GM10248 (cell line): ENCODE measurements at regions of chr12 and their contacts with region 1.

Region 1: GRCh38 chr12:7219599-7220243 is 30.2 kb downstream of the PEX5 start:
- DNase-seq: peak; percentile 60
- CTCF ChIP-seq: peak; percentile 67

Region 2: DNA sequence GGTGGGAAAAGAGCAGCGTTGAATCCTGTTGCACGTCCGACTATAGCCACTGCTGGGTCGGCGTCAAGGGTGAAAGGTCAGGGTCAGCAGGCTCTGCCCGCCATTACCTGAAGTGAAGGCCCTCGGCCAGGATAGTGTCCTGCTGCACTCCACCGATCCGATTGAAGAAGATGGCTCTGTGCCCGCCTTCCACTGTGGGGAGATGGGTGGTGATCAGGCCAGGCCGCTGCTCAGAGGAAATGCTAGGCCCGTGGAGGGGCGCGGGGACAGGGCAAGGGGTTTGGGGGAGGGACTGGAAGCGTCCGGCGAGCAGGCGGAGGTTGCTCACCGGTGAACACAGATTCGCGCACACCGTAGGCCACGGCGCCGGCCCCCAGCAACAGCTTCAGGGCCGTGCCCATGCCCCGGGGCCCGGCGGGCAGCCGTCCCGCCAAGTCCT is 249.6 kb before region 1 on chr12:
- CTCF ChIA-PET with region 1: no interaction called
- POLR2A ChIA-PET with region 1: no interaction called
- DNase-seq: no peak
- CTCF ChIP-seq: no peak

Region 3: DNA sequence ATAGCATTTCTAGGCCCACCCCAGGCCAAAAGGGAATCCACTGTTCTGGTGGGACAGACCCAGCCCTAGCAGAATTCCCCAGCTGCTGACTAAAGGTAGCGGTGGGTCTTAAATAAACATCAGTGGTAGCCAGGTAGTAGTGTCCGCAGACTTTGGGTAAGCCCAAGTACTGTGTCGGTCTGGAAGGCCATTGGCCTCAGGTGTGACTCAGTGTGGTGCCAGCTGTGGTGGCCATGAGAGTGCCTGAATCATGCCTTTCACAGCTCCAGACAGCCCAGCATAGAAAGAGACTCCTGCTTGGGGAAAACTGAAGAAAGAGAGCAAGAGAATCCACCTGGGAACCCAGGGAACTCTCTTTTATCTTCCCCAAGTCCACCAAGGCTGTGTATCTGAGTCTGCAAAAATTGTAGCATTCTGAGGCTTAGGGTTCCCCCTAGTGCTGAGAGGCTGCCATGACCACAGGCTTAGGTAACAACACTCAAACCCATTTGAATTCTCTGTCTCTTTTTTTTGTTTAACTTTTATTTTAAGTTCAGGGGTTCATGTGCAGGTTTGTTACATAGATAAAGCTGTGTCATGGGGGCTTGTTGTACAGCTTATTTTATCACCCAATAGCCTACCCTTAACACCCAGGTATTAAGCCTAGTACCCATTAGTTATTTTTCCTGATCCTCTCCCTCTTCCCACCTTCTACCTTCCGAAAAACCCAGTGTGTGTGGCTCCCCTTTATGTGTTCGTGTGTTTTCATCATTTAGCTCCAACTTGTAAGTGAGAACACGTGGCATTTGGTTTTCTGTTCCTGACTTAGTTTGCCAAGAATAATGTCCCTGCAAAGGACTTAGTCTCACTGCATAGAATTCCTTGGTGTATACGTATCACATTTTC is 240.9 kb after region 1 on chr12:
- CTCF ChIA-PET with region 1: interaction called, 24 read pairs
- POLR2A ChIA-PET with region 1: no interaction called
- DNase-seq: peak; percentile 55
- CTCF ChIP-seq: peak; percentile 76

Region 4: DNA sequence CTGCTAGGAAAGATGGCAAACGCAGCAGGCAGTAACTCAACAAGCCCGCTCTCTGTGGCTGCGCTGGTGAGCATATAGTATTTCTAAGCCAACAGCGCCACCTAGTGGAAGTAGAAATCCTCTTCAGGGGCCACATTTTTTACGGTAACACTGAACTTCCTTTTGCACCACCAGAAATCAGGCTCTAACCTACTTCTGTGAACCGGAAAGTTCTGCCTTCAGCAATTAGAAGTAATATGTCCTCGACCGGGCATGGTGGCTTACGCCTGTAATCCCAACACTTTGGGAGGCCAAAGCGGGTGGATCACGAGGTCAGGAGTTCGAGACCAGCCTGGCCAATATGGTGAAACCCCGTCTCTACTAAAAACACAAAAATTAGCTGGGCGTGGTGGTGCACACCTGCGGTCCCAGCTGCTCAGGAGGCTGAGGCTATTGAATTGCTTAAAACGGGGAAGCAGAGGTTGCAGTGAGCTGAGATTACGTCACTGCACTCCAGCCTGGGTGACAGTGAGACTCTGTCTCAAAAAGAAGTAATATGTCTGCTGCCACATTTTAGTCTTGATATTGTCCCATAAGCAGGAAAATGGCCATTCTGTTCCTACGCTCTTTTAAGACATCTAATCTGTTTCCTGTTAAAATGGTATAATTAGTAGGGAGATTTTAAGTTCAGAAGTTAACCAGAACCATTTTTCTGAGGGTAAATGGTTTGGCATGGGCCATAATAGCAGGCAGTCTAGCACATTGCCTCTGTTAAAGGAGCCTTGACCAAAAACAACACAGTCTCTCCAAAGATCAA is 419.2 kb after region 1 on chr12:
- CTCF ChIA-PET with region 1: interaction called, 17 read pairs
- POLR2A ChIA-PET with region 1: no interaction called
- DNase-seq: peak; percentile 76
- CTCF ChIP-seq: peak; percentile 77